Activated T-helper 2 cell treated with anti-CD3 and anti-CD28 coated beads, Interferon-gamma antibody, Interleukin-2, Interleukin-4, amounts not matched to agents 10 μg/mL and 5 μg/mL and 100 μg/mL, durations not matched to agents 14 hours and 24 hours and 36 hours (primary cell): ENCODE measurements at regions of chr17 and their contacts with region 1.

Region 1: DNA sequence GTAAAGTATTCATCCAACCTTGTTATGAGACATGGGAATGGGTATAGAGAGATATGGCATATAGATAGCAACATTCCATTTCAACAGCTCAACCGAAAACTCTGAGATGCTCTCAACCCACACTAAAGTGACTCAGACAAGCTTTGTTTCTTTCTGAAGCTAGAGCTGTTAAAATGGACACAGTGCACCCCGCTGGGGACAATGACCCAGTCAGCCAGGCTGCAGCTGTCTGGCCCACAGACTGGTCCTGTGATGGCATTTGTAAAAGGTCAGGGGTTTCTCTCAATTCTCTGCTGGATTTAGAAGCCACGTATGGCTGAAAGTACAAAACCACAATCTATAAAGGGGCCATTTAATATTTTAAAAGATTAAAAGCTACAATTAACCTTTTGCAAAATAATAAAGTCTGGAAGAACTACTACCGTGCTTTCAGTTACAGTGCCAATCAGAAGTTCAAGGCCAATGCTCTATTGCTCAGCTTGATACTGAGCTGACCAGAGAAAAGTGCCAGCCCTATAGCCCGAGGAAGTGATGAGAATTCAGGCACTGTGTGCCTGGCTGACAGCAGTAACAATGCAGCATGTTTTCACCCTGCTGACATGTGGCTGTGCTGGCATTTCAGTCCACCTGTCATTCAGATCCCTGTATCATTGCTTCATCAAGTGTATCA is 60.2 kb downstream of the TEX2 start:
- DNase-seq: no peak
- H3K4me3 Mint-ChIP-seq: no peak overlapping the region
- H3K27ac Mint-ChIP-seq: peak overlapping the region; percentile 60
- H3K4me1 Mint-ChIP-seq: peaks cover 45% of the 10 kb centered on the region
- H3K27me3 Mint-ChIP-seq: no peaks in the 10 kb centered on the region

Region 2: GRCh38 chr17:64063766-64064224 is 139.0 kb before region 1 on chr17:
- intact Hi-C with region 1: loop called (anchors 10 kb)
- DNase-seq: no peak
- H3K4me3 Mint-ChIP-seq: no peak overlapping the region
- H3K27ac Mint-ChIP-seq: peak overlapping the region; percentile 30
- H3K4me1 Mint-ChIP-seq: peaks cover 80% of the 10 kb centered on the region
- H3K27me3 Mint-ChIP-seq: no peaks in the 10 kb centered on the region

Region 3: DNA sequence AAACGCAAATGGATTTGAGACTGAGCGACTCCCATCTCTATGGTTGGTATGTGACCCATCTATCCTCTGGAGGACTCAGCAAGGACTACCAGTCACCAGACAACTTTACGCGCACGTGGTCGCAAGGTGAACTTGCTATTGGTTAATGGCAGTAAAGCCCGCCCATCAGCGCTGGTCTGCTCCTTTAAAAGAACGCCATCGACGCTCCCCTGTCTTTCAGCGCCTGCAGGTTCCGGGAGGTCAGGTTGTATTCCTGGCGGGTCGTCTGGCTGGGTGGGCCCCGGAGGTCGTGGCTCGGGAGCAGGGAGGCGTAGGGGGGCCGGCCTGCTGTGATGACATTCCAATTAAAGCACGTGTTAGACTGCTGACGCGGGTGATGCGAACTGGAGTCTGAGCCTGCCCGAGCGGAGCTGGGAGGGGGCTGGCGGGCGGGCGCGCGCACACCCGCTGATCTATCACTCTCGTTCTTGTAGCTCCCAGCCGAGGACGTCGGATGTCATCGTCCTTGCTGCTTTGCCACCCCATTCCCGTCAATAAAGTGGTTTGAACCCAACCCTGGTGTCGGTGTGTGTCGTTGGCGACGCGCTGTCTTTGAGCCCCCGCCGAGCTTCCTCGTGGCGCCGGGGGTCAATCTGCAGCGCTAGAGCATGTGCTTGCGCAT is 56.9 kb before region 1 on chr17:
- intact Hi-C with region 1: loop called (anchors 5 kb)
- DNase-seq: peak; percentile 94
- H3K4me3 Mint-ChIP-seq: no peak overlapping the region
- H3K27ac Mint-ChIP-seq: no peak overlapping the region
- H3K4me1 Mint-ChIP-seq: peaks cover 21% of the 10 kb centered on the region
- H3K27me3 Mint-ChIP-seq: no peaks in the 10 kb centered on the region

Region 4: DNA sequence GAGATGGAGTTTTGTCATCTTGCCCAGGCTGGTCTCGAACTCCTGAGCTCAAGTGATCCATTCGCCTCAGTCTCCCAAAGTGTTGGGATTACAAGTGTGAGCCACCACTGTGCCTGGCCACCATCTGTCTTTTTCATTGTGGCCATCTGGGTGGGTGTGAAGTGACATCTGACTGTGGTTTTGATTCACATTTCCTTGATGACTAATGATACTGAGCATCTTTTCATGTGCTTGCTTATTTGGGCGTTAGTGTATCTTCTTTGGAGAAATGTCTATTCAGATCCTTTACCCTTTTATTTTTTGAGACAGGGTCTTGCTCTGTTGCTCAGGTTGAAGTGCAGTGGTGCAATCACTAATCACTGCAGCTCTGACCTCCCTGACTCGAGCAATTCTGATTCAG is 19.0 kb before region 1 on chr17:
- intact Hi-C with region 1: loop called (anchors 1 kb)
- DNase-seq: no peak
- H3K4me3 Mint-ChIP-seq: no peak overlapping the region
- H3K27ac Mint-ChIP-seq: peak overlapping the region; percentile 63
- H3K4me1 Mint-ChIP-seq: peaks cover 18% of the 10 kb centered on the region
- H3K27me3 Mint-ChIP-seq: no peaks in the 10 kb centered on the region

Region 5: DNA sequence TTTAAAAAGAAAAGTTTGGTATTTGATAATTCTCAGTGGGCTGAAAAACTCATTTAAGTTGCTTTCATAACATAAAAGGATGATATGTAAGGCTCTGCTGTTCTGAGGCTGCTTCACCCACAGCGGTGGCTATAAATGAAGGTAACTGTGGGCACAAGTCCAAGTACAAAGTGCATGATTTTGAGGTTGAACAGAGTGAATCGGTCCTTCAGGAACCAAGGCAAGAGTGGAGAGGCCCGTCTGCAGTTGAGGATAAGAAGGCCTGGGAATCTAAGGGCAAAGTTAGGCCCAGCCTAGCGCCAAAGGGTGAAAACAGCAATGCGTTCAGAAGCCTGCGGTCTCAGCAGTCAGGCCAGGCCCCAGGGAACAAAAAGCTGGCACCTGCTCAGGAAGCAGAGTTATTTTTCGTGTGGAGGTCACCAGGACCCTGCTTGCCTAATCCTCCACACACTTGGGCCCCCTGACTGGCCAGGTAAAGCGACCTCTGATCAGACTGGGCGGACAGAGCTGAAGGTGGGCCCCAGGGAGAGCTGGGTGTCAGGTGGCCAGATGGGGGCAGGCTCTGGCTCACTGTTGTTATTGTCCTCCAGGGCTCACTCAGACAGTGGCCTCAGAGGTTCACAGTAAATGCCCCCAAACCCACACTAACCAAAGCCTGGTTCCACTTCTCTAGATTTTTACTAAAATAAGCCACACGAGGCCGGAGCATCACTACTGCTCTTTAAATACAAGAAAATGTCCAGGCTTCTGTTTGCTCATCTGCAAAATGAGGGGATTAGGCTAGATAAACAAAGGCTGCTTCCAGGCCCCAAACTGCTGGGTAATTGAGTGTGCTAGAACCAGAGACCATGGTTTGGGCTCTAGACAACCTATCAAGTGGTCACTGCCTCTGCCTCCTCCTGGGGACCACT is 13.8 kb after region 1 on chr17:
- intact Hi-C with region 1: loop called (anchors 1 kb)
- DNase-seq: no peak
- H3K4me3 Mint-ChIP-seq: no peak overlapping the region
- H3K27ac Mint-ChIP-seq: no peak overlapping the region
- H3K4me1 Mint-ChIP-seq: peaks cover 21% of the 10 kb centered on the region
- H3K27me3 Mint-ChIP-seq: no peaks in the 10 kb centered on the region

Region 6: DNA sequence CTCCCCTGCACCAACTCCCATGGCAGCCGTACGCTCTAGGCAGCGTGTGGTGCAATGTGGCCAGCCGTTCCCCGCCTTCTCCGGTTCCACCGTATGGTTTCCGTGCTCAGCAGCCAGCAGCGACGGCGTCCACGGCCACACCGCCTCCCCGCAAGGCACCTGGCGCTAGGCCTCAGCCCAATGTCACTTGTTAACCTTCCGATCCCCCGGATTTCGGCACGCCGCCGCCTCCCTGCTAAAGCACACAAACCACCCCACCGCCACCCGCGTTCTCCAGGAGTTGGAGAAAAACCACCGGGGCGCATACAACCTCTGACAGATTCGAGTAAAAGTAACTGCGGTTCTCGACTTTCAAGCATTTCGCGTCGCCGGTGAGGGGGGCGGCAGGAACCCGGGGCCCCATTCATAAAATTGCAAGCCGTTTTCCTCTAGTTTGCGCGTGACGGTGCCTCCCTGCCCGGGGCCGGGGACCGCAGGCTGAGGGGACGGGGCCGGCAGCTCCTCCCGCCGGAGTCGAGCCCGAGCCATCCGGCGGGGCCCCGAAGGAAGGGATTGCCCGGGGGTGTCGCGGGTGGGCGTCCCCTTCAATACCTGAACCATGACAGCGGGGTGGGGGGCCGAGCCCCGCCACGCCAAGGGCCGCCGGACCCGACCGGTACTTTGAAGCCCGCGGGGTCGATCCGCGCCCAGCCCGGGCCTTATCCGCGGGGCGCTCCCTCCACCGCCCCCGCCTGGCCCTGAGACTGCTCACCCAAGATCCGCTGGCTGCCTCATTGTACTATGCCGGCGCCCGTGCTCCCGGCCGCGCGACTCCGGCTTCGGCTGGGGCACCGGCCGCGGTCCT is 59.8 kb after region 1 on chr17 and contains the start of gene TEX2:
- intact Hi-C with region 1: loop called (anchors 5 kb)
- DNase-seq: peak; percentile 60
- H3K4me3 Mint-ChIP-seq: peak within 1 kb of the TSS; percentile 90
- H3K27ac Mint-ChIP-seq: peak within 1 kb of the TSS; percentile 85
- H3K4me1 Mint-ChIP-seq: peaks cover 28% of the 10 kb centered on the region
- H3K27me3 Mint-ChIP-seq: peaks cover 4% of the 10 kb centered on the region
- total RNA-seq, gene TEX2: 20.7 and 22.0 TPM in 2 replicates